Heart right ventricle (tissue), 16 donors: ENCODE measurements at regions of chr4 and their contacts with region 1.

Region 1: DNA sequence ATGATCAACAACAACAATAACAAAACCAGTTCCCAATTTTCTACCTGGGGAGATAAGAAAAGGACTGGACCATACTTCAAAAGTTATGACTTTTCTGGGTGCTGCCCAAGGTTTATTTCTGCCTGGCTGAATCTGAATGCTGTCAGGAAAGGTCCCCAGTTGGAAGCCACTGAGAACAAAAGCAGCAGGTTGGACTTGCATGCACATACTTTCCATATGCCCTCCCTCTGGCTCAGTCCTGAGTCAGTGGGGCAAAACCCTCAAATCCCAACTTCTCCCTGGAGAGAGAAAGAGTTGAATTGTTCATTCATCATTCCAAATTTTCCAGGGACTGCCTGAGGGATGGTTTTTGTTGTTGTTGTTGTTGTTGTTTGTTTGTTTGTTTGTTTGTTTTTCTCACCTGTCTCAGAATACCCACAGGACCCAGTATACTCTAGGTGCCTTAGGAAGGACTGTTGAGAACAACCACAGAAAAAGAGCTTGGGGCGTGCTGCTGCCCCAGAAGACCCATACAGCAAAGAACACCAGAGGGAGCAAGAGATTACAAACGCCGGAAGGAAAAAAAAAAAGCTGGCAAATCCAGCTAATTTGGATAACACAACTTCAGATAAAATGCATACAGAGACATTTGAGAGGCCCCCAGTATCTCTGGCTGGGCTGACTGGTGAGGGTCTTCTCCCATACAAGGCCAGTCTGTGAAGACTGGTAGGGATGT is 138.9 kb upstream of the INPP4B start:
- DNase-seq: no peak
- ATAC-seq: no peak
- H3K4me3 ChIP-seq: no peak overlapping the region
- H3K27ac ChIP-seq: no peak overlapping the region
- H3K4me1 ChIP-seq: peaks cover 0 to 6% (median 0%) of the 10 kb centered on the region in 9 donors
- H3K27me3 ChIP-seq: no peaks in the 10 kb centered on the region
- CTCF ChIP-seq: peak in 7 of 9 donors; percentile 13 to 46 (median 32)

Region 2: GRCh38 chr4:143482840-143483239 is 497.8 kb after region 1 on chr4:
- intact Hi-C with region 1: loop called in 2 of 10 experiments (anchors 5 to 10 kb)
- DNase-seq: peak in 1 of 2 donors; percentile 20
- ATAC-seq: peak in 6 of 8 donors; percentile 20 to 64 (median 54)
- H3K4me3 ChIP-seq: no peak overlapping the region
- H3K27ac ChIP-seq: no peak overlapping the region
- H3K4me1 ChIP-seq: peaks cover 0 to 9% (median 0%) of the 10 kb centered on the region in 9 donors
- H3K27me3 ChIP-seq: no peaks in the 10 kb centered on the region
- CTCF ChIP-seq: peak; percentile 36 to 86 (median 64)

Region 3: DNA sequence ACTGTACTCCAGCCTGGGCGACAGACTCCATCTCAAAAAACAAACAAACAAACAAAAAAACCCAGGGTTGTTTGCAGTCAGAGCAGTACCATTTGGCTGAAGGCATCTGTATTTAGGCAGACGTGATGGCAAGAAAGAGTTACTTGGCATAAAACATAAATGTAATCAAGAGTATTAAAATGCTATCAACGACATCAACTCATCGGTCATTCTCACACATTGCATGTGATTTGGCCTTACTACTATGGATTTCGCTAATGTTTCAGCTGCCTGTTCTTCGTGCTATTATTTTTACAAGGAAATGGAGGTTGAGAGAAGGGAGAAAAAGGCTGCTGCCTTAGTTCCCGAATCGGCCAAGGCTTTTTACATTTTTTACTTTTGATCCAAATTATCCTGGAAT is 513.0 kb after region 1 on chr4:
- intact Hi-C with region 1: loop called in 1 of 10 experiments (anchors 10 kb)
- DNase-seq: no peak
- ATAC-seq: no peak
- H3K4me3 ChIP-seq: no peak overlapping the region
- H3K27ac ChIP-seq: no peak overlapping the region
- H3K4me1 ChIP-seq: no peaks in the 10 kb centered on the region
- H3K27me3 ChIP-seq: no peaks in the 10 kb centered on the region
- CTCF ChIP-seq: no peak